Panc1 (cell line): ENCODE measurements at regions of chr19 and their contacts with region 1.

Region 1: GRCh38 chr19:6718741-6719539 is 1.5 kb downstream of the C3 start:
- DNase-seq: no peak
- ATAC-seq: peak; percentile 40
- H3K4me3 ChIP-seq: no peak overlapping the region
- H3K27ac ChIP-seq: no peak overlapping the region
- H3K4me1 ChIP-seq: no peaks in the 10 kb centered on the region
- H3K27me3 ChIP-seq: no peaks in the 10 kb centered on the region
- CTCF ChIP-seq: no peak

Region 2: DNA sequence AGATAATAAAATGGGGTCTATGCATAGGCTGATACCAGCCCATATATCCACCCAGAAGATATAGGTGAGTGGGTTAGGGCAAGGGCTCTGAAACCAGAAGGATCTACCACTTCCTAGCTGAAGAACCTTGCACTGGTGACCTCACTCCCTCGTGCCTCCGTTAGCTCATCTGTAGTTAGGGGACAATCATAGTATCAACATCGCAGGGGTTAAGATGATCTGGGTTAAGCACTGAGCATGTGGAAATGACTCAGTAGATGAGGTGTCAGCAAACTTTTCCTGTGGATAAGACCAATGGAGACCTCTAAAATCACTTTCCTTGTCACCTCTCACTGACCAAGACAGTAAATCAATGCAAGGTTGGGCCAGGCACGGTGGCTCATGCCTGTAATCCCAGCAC is 79.5 kb before region 1 on chr19:
- CTCF ChIA-PET with region 1: interaction called, 17 read pairs
- POLR2A ChIA-PET with region 1: no interaction called
- in situ Hi-C with region 1: no loop called
- intact Hi-C with region 1: no loop called
- DNase-seq: peak; percentile 88
- ATAC-seq: no peak; the same call in 1 of the 2 replicates
- H3K4me3 ChIP-seq: no peak overlapping the region
- H3K27ac ChIP-seq: no peak overlapping the region
- H3K4me1 ChIP-seq: no peaks in the 10 kb centered on the region
- H3K27me3 ChIP-seq: no peaks in the 10 kb centered on the region
- CTCF ChIP-seq: no peak